ENCODE measurements at regions of chr19 and their contacts with region 1.

Region 1: GRCh38 chr19:39412100-39412866 is at the start of gene PLEKHG2:
- DNase-seq: peak; percentile 94 to 100 (median 97)
- ATAC-seq: peak; percentile 61
- H3K4me3 ChIP-seq: peak within 1 kb of the TSS; percentile 100
- H3K4me3 Mint-ChIP-seq: peak within 1 kb of the TSS; percentile 95
- H3K27ac ChIP-seq: peak within 1 kb of the TSS; percentile 100
- H3K27ac Mint-ChIP-seq: peak within 1 kb of the TSS; percentile 98
- H3K4me1 ChIP-seq: peaks cover 72% of the 10 kb centered on the region
- H3K4me1 Mint-ChIP-seq: peaks cover 41% of the 10 kb centered on the region
- H3K27me3 ChIP-seq: no peaks in the 10 kb centered on the region
- H3K27me3 Mint-ChIP-seq: peaks cover 12% of the 10 kb centered on the region
- CTCF ChIP-seq: peak; percentile 80
- total RNA-seq, gene PLEKHG2: 80.6 to 81.4 TPM

Region 2: DNA sequence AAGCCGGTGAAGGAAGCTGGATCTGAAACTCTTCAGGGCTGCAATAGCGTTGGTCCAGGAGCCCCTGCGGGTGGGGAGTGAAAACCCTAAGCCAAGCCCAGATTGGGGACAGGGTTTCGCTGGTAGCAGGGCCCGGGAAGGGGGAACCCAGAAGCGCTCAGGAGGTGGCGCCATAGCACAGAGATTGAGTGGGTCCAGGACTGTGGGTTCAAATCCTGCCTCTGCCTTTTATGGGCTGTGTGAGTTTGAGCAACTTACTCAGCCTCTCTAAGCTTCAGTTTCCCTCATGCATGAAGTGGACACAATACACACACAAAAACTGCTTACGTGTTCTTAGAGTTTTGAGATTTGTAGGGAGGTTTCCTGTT is 199.9 kb before region 1 on chr19:
- CTCF ChIA-PET with region 1: no interaction called
- POLR2A ChIA-PET with region 1: no interaction called
- intact Hi-C with region 1: loop called in 1 of 2 experiments (anchors 2 kb)
- DNase-seq: peak; percentile 30 to 73 (median 50)
- ATAC-seq: peak; percentile 76
- H3K4me3 ChIP-seq: no peak overlapping the region
- H3K4me3 Mint-ChIP-seq: no peak overlapping the region
- H3K27ac ChIP-seq: no peak overlapping the region
- H3K27ac Mint-ChIP-seq: no peak overlapping the region
- H3K4me1 ChIP-seq: peaks cover 5% of the 10 kb centered on the region
- H3K4me1 Mint-ChIP-seq: no peaks in the 10 kb centered on the region
- H3K27me3 ChIP-seq: no peaks in the 10 kb centered on the region
- H3K27me3 Mint-ChIP-seq: peaks cover 5% of the 10 kb centered on the region
- CTCF ChIP-seq: peak; percentile 47

Region 3: DNA sequence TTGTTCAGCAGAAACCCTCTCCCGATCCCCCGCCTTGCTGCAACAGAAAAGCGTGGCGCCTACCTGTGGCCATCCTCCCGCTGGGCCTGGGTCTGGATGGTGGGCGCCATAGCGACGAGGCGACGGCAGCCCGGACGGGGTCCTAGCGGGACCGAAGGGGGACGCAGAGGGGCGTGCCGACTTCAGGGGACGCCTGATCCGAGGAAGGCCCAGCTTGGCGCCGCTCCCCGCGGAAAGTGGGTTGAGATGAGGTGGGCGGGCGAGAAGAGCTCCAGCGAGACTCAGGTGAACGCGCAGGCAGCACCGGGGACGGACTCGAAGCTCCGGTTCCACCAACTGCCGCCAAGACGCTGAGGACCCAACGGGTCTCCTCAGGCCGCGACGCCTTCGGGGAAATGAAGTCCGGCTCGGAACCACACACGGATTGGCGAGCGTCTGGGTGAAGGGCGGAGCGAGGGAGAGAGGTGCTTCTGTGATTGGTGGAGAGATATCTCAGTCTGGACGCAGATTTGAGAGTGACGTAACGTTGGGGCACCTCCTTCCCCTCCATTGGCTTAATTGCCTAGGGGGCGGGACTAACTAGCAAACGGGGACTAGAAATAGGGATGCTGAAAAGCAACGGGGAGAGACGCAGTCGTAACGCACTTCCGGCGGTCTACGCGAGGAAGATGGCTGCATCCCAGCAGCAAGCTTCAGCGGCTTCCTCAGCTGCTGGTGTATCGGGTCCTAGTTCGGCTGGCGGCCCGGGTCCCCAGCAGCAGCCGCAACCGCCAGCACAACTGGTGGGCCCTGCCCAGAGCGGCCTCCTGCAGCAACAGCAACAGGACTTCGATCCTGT is 21.3 kb before region 1 on chr19 and contains the starts of genes MED29 and PAF1:
- CTCF ChIA-PET with region 1: interaction called, 31 read pairs
- POLR2A ChIA-PET with region 1: interaction called, 144 read pairs
- intact Hi-C with region 1: loop called in 1 of 2 experiments (anchors 1 kb)
- DNase-seq: peak; percentile 91 to 100 (median 94)
- ATAC-seq: peak; percentile 90
- H3K4me3 ChIP-seq: peak within 1 kb of the TSS; percentile 91
- H3K4me3 Mint-ChIP-seq: peak within 1 kb of the TSS; percentile 90
- H3K27ac ChIP-seq: peak within 1 kb of the TSS; percentile 98 to 100
- H3K27ac Mint-ChIP-seq: peak within 1 kb of the TSS; percentile 96
- H3K4me1 ChIP-seq: peaks cover 44% of the 10 kb centered on the region
- H3K4me1 Mint-ChIP-seq: peaks cover 33% of the 10 kb centered on the region
- H3K27me3 ChIP-seq: no peaks in the 10 kb centered on the region
- H3K27me3 Mint-ChIP-seq: no peaks in the 10 kb centered on the region
- CTCF ChIP-seq: no peak
- total RNA-seq, gene MED29: 45.0 to 46.1 TPM
- total RNA-seq, gene PAF1: 99.6 to 101 TPM

Region 4: DNA sequence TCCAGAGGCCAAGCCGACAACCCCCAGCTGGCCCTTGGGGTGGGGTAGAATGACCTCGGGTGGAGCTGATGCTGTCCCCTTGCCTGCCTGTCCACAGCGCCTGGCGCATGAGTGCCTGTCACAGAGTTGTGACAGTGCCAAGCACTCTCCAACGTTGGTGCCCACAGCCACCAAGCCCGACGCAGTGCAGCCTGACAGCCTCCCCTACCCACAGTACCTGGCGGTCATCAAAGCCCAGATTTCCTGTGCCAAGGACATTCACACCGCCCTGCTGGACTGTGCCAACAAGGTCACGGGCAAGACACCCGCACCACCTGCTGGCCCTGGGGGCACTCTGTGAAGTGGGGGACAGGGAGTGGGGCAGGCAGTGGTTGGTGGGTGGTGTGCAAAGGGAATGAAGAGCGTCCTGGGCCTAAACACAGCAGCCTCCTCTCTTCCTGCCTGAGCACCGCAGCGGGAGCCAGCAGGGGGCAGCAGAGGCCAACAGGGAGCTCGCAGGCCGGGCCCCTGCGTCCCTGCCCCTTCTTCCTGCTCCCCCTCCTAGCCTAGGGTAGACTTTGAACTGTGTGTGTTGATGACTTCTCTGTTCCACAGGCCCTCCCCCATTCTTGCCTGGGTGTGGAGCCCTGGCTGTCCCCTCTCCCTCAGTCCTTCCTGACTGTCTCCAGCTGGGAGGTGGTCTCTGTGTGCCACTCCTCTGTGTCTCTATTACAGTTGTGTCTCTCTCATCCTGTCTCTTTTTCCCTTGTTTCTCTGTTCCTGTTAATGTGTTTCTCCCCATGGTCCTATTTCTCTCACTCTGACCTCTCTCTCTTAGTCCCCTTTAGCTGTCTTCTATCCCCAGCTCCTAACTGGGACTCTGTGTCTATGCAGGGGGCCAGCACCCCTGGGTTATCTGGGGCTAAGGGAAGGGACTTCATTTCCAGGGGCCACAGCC is 14.7 kb before region 1 on chr19:
- CTCF ChIA-PET with region 1: interaction called, 102 read pairs
- POLR2A ChIA-PET with region 1: interaction called, 144 read pairs
- intact Hi-C with region 1: loop called (anchors 1 kb)
- DNase-seq: peak; percentile 87 to 98 (median 94)
- ATAC-seq: peak; percentile 43
- H3K4me3 ChIP-seq: peak overlapping the region; percentile 31
- H3K4me3 Mint-ChIP-seq: peak overlapping the region; percentile 63
- H3K27ac ChIP-seq: peak overlapping the region; percentile 90 to 100
- H3K27ac Mint-ChIP-seq: peak overlapping the region; percentile 98
- H3K4me1 ChIP-seq: peaks cover 68% of the 10 kb centered on the region
- H3K4me1 Mint-ChIP-seq: peaks cover 54% of the 10 kb centered on the region
- H3K27me3 ChIP-seq: no peaks in the 10 kb centered on the region
- H3K27me3 Mint-ChIP-seq: no peaks in the 10 kb centered on the region
- CTCF ChIP-seq: peak; percentile 91

Region 5: GRCh38 chr19:39494661-39495060 is 82.4 kb after region 1 on chr19:
- CTCF ChIA-PET with region 1: no interaction called
- POLR2A ChIA-PET with region 1: no interaction called
- intact Hi-C with region 1: no loop called
- DNase-seq: no peak
- ATAC-seq: no peak
- H3K4me3 ChIP-seq: no peak overlapping the region
- H3K4me3 Mint-ChIP-seq: no peak overlapping the region
- H3K27ac ChIP-seq: no peak overlapping the region
- H3K27ac Mint-ChIP-seq: no peak overlapping the region
- H3K4me1 ChIP-seq: peaks cover 20% of the 10 kb centered on the region
- H3K4me1 Mint-ChIP-seq: peaks cover 13% of the 10 kb centered on the region
- H3K27me3 ChIP-seq: peaks cover 18 to 22% of the 10 kb centered on the region in 2 experiments
- H3K27me3 Mint-ChIP-seq: peaks cover 23% of the 10 kb centered on the region
- CTCF ChIP-seq: no peak

Measured in CD4-positive, alpha-beta T cell (primary cell).